ENCODE measurements at regions of chr7 and their contacts with region 1.

Region 1: DNA sequence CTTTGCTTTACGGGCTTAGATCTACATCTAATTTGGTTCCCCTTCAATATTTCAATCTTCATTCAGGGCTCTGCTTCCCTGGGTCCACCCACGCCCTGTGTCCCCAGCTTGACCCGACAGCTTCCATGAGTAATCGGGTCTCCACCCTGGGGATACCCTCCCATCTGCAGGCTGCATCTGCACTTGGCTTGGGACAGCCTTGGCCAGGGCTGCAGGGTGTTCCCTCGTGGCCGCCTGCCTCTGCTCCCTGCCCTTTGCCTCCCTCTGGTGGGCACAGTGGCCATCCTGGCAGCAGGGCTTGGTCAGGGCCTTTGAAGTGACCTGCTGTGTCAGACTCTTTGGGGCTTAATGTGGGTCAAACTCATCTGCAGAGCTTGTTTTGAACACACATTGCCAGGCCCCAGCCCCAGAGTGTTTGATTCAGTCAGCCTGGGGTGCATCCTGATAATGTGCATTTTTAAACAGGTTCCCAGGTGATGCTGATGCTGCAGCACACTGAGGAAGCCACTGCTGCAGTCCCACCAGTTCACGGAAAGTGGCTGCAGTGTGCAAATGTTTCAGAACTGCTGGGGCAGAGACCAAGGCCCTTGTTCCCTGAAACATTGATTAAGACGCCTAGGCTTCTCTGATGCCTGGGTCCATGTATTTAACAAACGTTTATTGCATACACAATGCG is 80.7 kb upstream of the SEC61G start:
- DNase-seq: no peak
- H3K4me3 ChIP-seq: no peak overlapping the region
- H3K27me3 ChIP-seq: no peaks in the 10 kb centered on the region; the same call in 1 of the 2 replicates
- CTCF ChIP-seq: peak; percentile 81

Region 2: DNA sequence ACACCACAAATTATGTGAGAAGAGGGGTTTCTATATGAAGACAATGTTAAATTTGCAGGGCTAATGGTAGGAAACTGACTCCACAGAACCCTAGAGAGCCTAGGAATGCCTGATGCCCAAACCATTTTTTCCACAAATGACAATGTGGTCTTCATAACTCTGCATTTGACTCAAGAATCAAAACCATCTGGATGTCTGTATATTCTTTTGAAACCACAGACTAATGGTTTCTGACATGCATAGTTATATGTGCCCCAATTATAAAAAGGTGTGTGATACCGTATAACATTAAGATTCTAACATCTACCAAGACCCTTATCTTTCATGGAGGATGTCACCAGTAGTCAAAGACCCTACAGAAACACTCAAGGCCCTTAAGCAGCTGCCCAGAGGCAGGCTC is 100.9 kb before region 1 on chr7:
- CTCF ChIA-PET with region 1: no interaction called
- POLR2A ChIA-PET with region 1: no interaction called
- DNase-seq: no peak
- H3K4me3 ChIP-seq: no peak overlapping the region
- H3K27me3 ChIP-seq: no peaks in the 10 kb centered on the region
- CTCF ChIP-seq: no peak

Region 3: GRCh38 chr7:54788664-54789063 is 51.0 kb before region 1 on chr7:
- CTCF ChIA-PET with region 1: interaction called, 38 read pairs
- POLR2A ChIA-PET with region 1: no interaction called
- DNase-seq: peak; percentile 51
- H3K4me3 ChIP-seq: no peak overlapping the region
- H3K27me3 ChIP-seq: no peaks in the 10 kb centered on the region
- CTCF ChIP-seq: peak; percentile 79

Measured in BJ (cell line).